SK-N-SH (cell line): ENCODE measurements at regions of chr10 and their contacts with region 1.

Region 1: GRCh38 chr10:32378363-32379317 is 31.7 kb upstream of the EPC1 start:
- DNase-seq: peak; percentile 75
- H3K4me3 ChIP-seq: peak overlapping the region; percentile 68 to 80
- H3K27ac ChIP-seq: peak overlapping the region; percentile 84 to 97
- H3K4me1 ChIP-seq: no peaks in the 10 kb centered on the region; a peak in 3 of 4 replicates
- H3K27me3 ChIP-seq: no peaks in the 10 kb centered on the region
- CTCF ChIP-seq: no peak
- EP300 ChIP-seq: no peak
- RAD21 ChIP-seq: peak; percentile 32

Region 2: GRCh38 chr10:31836569-31837406 is 541.9 kb before region 1 on chr10:
- CTCF ChIA-PET with region 1: no interaction called
- POLR2A ChIA-PET with region 1: no interaction called
- DNase-seq: peak; percentile 26
- H3K4me3 ChIP-seq: no peak overlapping the region; a peak in 1 of 4 replicates
- H3K27ac ChIP-seq: no peak overlapping the region
- H3K4me1 ChIP-seq: peaks cover 6 to 10% of the 10 kb centered on the region in 2 experiments; a peak in 3 of 4 replicates
- H3K27me3 ChIP-seq: no peaks in the 10 kb centered on the region
- CTCF ChIP-seq: peak; percentile 59
- EP300 ChIP-seq: no peak
- RAD21 ChIP-seq: peak; percentile 65

Region 3: GRCh38 chr10:32332299-32332750 is 46.3 kb before region 1 on chr10:
- CTCF ChIA-PET with region 1: no interaction called
- POLR2A ChIA-PET with region 1: no interaction called
- DNase-seq: no peak
- H3K4me3 ChIP-seq: no peak overlapping the region
- H3K27ac ChIP-seq: peak overlapping the region in 1 of 2 experiments; percentile 43; a peak in 1 of 4 replicates
- H3K4me1 ChIP-seq: peaks cover 5 to 22% of the 10 kb centered on the region in 2 experiments; a peak in 3 of 4 replicates
- H3K27me3 ChIP-seq: no peaks in the 10 kb centered on the region
- CTCF ChIP-seq: no peak
- EP300 ChIP-seq: no peak
- RAD21 ChIP-seq: no peak

Region 4: DNA sequence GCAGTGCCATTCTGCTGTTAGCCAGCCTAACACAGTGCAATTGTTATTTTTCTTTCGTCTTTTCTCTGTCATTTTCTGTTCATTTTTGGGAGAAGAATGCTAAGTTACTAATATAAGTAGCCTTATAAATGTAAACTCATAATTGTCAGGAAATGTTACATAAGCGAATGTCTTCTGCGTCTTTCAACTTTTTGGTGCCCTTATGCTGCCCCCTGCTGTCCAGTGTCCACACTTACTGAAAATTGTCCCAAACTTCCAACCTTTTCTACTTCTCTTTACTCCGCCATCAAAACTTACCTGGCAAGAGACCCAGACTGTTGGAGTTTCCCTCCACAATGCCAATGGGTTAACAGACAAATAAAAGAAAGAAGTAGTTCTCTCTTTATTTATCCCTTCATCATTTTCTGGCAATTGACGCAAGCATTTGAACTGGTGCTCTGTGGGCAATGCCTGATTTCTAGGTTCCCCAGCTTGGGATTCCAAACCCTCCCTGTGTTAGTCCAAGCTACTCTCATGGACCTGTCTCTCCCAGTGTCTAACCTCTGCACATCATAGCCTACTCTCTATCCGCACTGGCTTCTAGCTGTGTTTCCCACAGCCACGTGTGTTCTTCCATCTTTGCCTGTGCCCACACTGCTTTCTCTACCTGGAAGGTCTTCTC is 10.7 kb before region 1 on chr10:
- CTCF ChIA-PET with region 1: interaction called, 12 read pairs
- POLR2A ChIA-PET with region 1: no interaction called
- DNase-seq: peak; percentile 46
- H3K4me3 ChIP-seq: no peak overlapping the region; a peak in 1 of 4 replicates
- H3K27ac ChIP-seq: no peak overlapping the region
- H3K4me1 ChIP-seq: no peaks in the 10 kb centered on the region; a peak in 1 of 4 replicates
- H3K27me3 ChIP-seq: no peaks in the 10 kb centered on the region
- CTCF ChIP-seq: peak; percentile 87
- EP300 ChIP-seq: no peak
- RAD21 ChIP-seq: peak; percentile 82

Region 5: DNA sequence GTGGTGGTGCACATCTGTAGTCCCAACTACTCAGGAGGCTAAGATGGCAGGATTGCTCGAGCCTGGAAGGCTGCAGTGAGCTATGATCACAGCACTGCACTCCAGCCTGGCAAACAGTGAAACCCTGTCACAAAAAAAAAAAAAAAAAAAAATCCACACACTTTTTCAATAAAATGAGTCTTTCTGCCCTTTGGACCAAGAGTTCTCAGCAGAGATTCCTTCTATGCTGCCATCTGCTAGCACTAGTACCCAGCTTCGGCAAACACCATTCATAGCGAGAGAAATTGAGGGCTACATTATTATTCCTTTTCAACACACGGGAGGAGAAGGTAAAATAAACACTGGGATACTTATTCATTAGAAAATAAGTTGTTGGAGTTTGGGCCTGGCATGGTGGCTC is 23.9 kb after region 1 on chr10:
- CTCF ChIA-PET with region 1: no interaction called
- POLR2A ChIA-PET with region 1: no interaction called
- DNase-seq: no peak
- H3K4me3 ChIP-seq: no peak overlapping the region
- H3K27ac ChIP-seq: no peak overlapping the region
- H3K4me1 ChIP-seq: no peaks in the 10 kb centered on the region; a peak in 1 of 4 replicates
- H3K27me3 ChIP-seq: no peaks in the 10 kb centered on the region
- CTCF ChIP-seq: no peak
- EP300 ChIP-seq: no peak
- RAD21 ChIP-seq: no peak